Breast epithelium (tissue), 4 donors: ENCODE measurements at regions of chr2 and their contacts with region 1.

Region 1: GRCh38 chr2:132577686-132578085 is 92.3 kb downstream of the LYPD1 start:
- DNase-seq: no peak
- H3K4me3 ChIP-seq: no peak overlapping the region
- H3K27ac ChIP-seq: no peak overlapping the region
- H3K4me1 ChIP-seq: no peaks in the 10 kb centered on the region
- H3K27me3 ChIP-seq: no peaks in the 10 kb centered on the region
- CTCF ChIP-seq: no peak
- POLR2A ChIP-seq: no peak

Region 2: DNA sequence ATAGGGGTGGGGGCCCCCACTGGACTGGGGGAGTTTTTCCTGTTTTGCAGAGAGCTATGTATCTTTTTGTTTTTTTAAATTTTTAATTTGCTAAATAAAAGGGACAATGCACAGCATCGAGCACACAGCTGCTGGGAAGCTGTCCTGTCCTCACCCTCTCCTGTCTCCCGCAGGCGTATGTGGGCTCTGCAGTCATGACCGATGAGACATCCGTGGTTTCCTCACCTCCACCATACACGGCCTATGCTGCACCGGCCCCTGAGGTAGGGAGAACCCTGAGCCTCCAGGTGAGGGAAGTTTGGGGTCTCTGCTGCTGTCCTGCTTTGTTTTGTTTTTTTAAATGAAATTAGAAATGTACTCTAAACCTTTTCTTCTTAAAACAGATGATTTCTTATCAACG is 1445.0 kb before region 1 on chr2:
- intact Hi-C with region 1: no loop called
- DNase-seq: no peak
- H3K4me3 ChIP-seq: no peak overlapping the region
- H3K27ac ChIP-seq: no peak overlapping the region
- H3K4me1 ChIP-seq: no peaks in the 10 kb centered on the region
- H3K27me3 ChIP-seq: no peaks in the 10 kb centered on the region
- CTCF ChIP-seq: no peak
- POLR2A ChIP-seq: no peak

Region 3: DNA sequence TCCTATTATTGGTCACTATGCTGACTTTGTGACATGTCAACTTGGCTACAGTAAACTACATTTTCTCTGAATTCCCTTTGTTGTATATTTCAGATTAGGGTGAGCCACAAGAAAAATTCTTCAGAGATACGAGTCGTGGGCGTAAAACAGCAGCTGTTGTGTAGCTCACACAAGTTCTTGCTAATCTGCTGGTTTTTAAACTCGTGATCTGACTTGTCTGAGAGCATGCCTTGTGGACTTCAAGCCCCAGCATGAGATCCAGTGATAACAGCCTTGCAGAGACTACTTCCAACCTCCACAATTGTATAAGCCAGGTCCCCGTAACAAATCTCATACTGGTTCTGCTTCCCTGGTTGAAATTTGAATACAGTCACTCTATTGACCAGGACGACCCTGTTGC is 352.1 kb after region 1 on chr2:
- intact Hi-C with region 1: loop called (anchors 5 kb)
- DNase-seq: no peak
- H3K4me3 ChIP-seq: no peak overlapping the region
- H3K27ac ChIP-seq: no peak overlapping the region
- H3K4me1 ChIP-seq: no peaks in the 10 kb centered on the region
- H3K27me3 ChIP-seq: no peaks in the 10 kb centered on the region
- CTCF ChIP-seq: no peak
- POLR2A ChIP-seq: no peak